ENCODE measurements at regions of chr2 and their contacts with region 1.

Region 1: DNA sequence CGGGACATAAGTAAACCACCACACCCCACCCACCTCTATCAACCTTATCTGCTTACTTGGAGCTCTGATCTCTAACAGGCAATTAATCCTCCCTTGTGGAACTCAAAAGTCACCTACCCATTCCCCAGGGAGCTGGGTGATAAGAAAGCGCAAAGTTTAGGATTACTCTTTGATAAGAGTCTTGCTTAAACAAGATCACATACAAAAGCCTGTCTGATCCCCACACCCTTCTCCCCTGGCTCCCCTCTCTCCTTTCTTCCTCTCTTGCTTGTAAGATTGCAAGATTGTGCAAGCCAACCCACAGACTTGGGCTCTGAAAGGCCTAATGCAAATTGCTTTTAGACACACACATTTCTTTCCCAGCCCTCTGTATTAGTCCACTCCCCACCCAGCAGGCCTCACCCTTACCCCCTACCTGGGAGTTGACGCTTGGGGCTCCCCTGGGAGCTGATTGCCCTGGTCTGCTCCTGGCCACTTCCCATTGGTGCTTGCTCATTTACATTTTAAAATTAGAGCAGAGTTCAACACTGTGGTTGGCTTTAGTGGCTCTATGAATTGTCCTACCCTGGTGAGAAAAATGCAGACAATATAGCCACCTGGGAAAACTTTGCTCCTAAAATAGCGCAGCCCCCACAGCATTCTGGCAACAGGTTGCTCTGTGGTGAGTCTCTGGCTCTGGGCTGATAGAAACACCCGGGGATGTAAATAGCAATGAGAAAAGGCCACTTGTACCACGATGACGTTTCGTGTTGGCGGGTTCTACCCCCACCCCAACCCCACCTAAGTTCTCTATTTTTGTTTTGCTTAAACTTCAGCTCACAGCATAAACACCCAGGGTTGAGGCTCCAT is 92.8 kb upstream of the MSH2 start:
- DNase-seq: peak; percentile 93 to 97
- H3K4me3 ChIP-seq: no peak overlapping the region
- H3K4me3 Mint-ChIP-seq: peak overlapping the region; percentile 66
- H3K27ac Mint-ChIP-seq: peak overlapping the region; percentile 98
- H3K4me1 ChIP-seq: peaks cover 62% of the 10 kb centered on the region
- H3K4me1 Mint-ChIP-seq: peaks cover 37% of the 10 kb centered on the region
- H3K27me3 ChIP-seq: no peaks in the 10 kb centered on the region
- H3K27me3 Mint-ChIP-seq: no peaks in the 10 kb centered on the region
- CTCF ChIP-seq: no peak

Region 2: GRCh38 chr2:47076586-47077441 is 233.4 kb before region 1 on chr2:
- CTCF ChIA-PET with region 1: no interaction called
- POLR2A ChIA-PET with region 1: interaction called, 4 read pairs
- intact Hi-C with region 1: loop called (anchors 2 kb)
- DNase-seq: peak; percentile 91 to 95
- H3K4me3 ChIP-seq: no peak overlapping the region
- H3K4me3 Mint-ChIP-seq: peak overlapping the region; percentile 52
- H3K27ac Mint-ChIP-seq: peak overlapping the region; percentile 89
- H3K4me1 ChIP-seq: peaks cover 58% of the 10 kb centered on the region
- H3K4me1 Mint-ChIP-seq: peaks cover 73% of the 10 kb centered on the region
- H3K27me3 ChIP-seq: no peaks in the 10 kb centered on the region
- H3K27me3 Mint-ChIP-seq: no peaks in the 10 kb centered on the region
- CTCF ChIP-seq: peak in 1 of 2 experiments; percentile 13

Region 3: GRCh38 chr2:47205576-47206141 is 104.5 kb before region 1 on chr2:
- CTCF ChIA-PET with region 1: no interaction called
- POLR2A ChIA-PET with region 1: no interaction called
- intact Hi-C with region 1: loop called (anchors 5 kb)
- DNase-seq: no peak
- H3K4me3 ChIP-seq: no peak overlapping the region
- H3K4me3 Mint-ChIP-seq: no peak overlapping the region
- H3K27ac Mint-ChIP-seq: no peak overlapping the region
- H3K4me1 ChIP-seq: peaks cover 17% of the 10 kb centered on the region
- H3K4me1 Mint-ChIP-seq: peaks cover 28% of the 10 kb centered on the region
- H3K27me3 ChIP-seq: no peaks in the 10 kb centered on the region
- H3K27me3 Mint-ChIP-seq: no peaks in the 10 kb centered on the region
- CTCF ChIP-seq: no peak

Region 4: DNA sequence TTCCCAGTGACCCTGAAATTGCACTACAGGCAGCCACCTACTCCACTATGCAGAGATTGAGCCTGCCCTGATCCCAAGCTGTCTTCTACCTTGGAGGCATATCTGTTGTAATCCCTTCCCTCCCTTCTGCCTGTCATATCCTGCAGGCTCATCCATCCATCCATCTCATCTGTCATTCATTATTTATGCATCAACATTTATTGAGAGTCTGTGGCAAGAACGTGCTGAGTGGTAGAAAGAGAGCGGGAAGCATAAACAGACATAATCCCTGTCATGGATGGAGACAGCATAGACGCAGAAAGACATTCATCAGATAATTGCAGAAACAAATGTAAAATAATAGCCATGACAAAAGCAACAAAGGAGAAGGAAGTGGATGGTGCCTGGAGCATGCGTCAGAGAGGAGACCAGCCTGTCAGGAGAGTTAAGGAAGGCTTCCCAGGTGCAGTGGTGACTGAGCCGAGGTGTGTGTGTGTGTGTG is 44.4 kb before region 1 on chr2:
- CTCF ChIA-PET with region 1: interaction called, 3 read pairs
- POLR2A ChIA-PET with region 1: no interaction called
- intact Hi-C with region 1: loop called (anchors 1 kb)
- DNase-seq: no peak
- H3K4me3 ChIP-seq: no peak overlapping the region
- H3K4me3 Mint-ChIP-seq: peak overlapping the region; percentile 5
- H3K27ac Mint-ChIP-seq: peak overlapping the region; percentile 3
- H3K4me1 ChIP-seq: peaks cover 48% of the 10 kb centered on the region
- H3K4me1 Mint-ChIP-seq: peaks cover 26% of the 10 kb centered on the region
- H3K27me3 ChIP-seq: no peaks in the 10 kb centered on the region
- H3K27me3 Mint-ChIP-seq: no peaks in the 10 kb centered on the region
- CTCF ChIP-seq: no peak

Region 5: DNA sequence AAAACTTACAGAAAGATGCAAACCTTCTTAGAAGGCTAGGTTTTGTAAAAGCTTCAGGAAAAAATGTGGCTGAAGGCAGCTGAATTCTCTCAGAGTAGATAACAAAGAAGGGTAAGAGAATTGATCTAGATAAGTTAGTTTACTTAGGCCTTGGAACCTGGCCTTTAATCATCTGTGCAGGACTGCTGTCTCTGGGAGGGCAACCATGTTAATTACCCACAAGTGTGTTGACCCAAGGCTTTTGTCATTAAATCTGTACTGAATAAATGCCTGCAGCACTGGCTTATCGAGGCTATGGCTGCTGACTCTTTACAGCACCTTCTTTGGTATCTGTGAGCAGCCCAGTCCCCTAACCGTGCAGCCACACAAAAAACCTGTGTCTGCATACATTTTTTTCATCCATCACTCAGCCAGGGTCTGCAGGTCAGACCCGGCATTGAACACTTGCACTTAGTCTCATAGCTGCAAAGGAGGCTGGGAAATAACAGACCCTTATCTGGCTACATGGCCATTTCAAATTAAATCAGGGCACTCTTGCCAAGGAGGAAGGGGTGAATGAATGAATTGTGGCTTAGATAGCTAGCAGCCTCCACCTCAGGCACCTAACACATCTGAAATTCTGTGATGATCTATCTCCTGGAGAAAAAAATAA is 27.4 kb before region 1 on chr2:
- CTCF ChIA-PET with region 1: interaction called, 9 read pairs
- POLR2A ChIA-PET with region 1: interaction called, 9 read pairs
- intact Hi-C with region 1: loop called (anchors 1 kb)
- DNase-seq: peak; percentile 75 to 87
- H3K4me3 ChIP-seq: no peak overlapping the region
- H3K4me3 Mint-ChIP-seq: peak overlapping the region; percentile 27
- H3K27ac Mint-ChIP-seq: peak overlapping the region; percentile 90
- H3K4me1 ChIP-seq: peaks cover 41% of the 10 kb centered on the region
- H3K4me1 Mint-ChIP-seq: peaks cover 27% of the 10 kb centered on the region
- H3K27me3 ChIP-seq: no peaks in the 10 kb centered on the region
- H3K27me3 Mint-ChIP-seq: no peaks in the 10 kb centered on the region
- CTCF ChIP-seq: no peak

Region 6: GRCh38 chr2:47288864-47289263 is 21.3 kb before region 1 on chr2:
- CTCF ChIA-PET with region 1: no interaction called
- POLR2A ChIA-PET with region 1: no interaction called
- intact Hi-C with region 1: loop called (anchors 1 kb)
- DNase-seq: no peak
- H3K4me3 ChIP-seq: no peak overlapping the region
- H3K4me3 Mint-ChIP-seq: no peak overlapping the region
- H3K27ac Mint-ChIP-seq: no peak overlapping the region
- H3K4me1 ChIP-seq: peaks cover 52% of the 10 kb centered on the region
- H3K4me1 Mint-ChIP-seq: peaks cover 23% of the 10 kb centered on the region
- H3K27me3 ChIP-seq: no peaks in the 10 kb centered on the region
- H3K27me3 Mint-ChIP-seq: no peaks in the 10 kb centered on the region
- CTCF ChIP-seq: no peak

Region 7: DNA sequence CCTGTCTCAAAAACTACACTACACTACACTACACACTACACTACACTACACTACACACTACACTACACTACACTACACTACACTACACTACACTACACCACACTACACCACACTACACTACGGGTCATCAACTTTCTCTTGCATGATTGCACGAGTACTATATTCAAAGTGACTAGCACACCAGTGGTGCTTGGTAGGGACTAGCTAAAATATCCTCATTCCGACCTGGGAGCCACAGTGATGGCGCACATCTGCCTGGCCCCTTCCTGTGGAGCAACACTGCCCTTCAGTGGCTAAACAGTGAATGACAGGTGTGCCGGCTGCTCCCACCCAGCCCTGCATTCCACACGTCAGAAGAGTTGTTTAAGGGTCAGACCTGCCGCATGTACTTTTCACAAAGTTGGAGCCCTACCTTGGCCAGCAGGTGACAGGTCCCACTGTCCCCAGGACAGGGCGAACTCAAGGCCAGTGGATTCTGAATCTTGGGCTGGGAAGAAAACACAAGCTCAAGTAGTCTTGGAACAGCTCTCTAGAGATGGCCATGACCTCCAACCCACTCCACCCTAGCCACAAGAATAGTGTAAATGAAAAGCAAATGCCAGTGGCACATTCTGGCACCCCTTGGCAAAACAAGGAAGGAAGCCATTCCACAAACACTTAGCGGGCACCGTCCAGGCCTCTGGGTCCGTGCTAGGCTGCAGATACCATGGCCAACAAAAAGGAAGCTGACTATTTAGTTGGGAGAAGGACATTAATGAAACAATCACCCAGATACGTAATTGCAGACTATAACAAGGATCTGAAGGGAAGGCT is 13.0 kb after region 1 on chr2:
- CTCF ChIA-PET with region 1: interaction called, 14 read pairs
- POLR2A ChIA-PET with region 1: interaction called, 3 read pairs
- intact Hi-C with region 1: no loop called
- DNase-seq: peak; percentile 82 to 91
- H3K4me3 ChIP-seq: no peak overlapping the region
- H3K4me3 Mint-ChIP-seq: no peak overlapping the region
- H3K27ac Mint-ChIP-seq: no peak overlapping the region
- H3K4me1 ChIP-seq: peaks cover 28% of the 10 kb centered on the region
- H3K4me1 Mint-ChIP-seq: peaks cover 25% of the 10 kb centered on the region
- H3K27me3 ChIP-seq: no peaks in the 10 kb centered on the region
- H3K27me3 Mint-ChIP-seq: no peaks in the 10 kb centered on the region
- CTCF ChIP-seq: peak; percentile 95 to 98

Region 8: DNA sequence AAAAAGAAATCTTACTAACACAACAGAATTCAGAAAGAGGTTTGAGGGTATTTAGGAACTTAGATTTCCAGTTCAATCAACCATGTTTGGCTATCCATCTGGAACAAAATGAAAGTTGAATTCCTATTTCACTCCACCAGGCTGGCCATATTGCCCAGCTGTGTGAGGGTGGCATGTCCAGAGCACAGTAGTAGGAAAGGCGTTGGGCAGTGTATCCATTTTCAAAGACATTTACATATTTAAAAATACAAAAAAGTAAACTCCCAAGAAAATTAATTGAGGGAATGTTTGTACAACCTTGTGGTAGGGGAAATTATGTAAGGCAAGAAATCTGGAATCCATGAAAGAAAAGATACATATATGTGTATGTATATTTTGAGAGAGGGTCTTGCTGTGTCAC is 71.2 kb after region 1 on chr2:
- CTCF ChIA-PET with region 1: no interaction called
- POLR2A ChIA-PET with region 1: no interaction called
- intact Hi-C with region 1: no loop called
- DNase-seq: no peak
- H3K4me3 ChIP-seq: no peak overlapping the region
- H3K4me3 Mint-ChIP-seq: no peak overlapping the region
- H3K27ac Mint-ChIP-seq: no peak overlapping the region
- H3K4me1 ChIP-seq: no peaks in the 10 kb centered on the region
- H3K4me1 Mint-ChIP-seq: no peaks in the 10 kb centered on the region
- H3K27me3 ChIP-seq: no peaks in the 10 kb centered on the region
- H3K27me3 Mint-ChIP-seq: no peaks in the 10 kb centered on the region
- CTCF ChIP-seq: no peak

Measured in Caco-2 (cell line).